PC-9 (cell line): ENCODE measurements at regions of chr2 and their contacts with region 1.

Region 1: GRCh38 chr2:47402805-47403608 is at the start of gene MSH2:
- DNase-seq: peak; percentile 86 to 93
- H3K4me3 ChIP-seq: peak within 1 kb of the TSS; percentile 61
- H3K27ac ChIP-seq: peak within 1 kb of the TSS; percentile 42
- H3K4me1 ChIP-seq: peaks cover 20% of the 10 kb centered on the region
- H3K27me3 ChIP-seq: no peaks in the 10 kb centered on the region
- CTCF ChIP-seq: no peak
- total RNA-seq, gene MSH2: 41.7 and 54.2 TPM in 2 replicates

Region 2: DNA sequence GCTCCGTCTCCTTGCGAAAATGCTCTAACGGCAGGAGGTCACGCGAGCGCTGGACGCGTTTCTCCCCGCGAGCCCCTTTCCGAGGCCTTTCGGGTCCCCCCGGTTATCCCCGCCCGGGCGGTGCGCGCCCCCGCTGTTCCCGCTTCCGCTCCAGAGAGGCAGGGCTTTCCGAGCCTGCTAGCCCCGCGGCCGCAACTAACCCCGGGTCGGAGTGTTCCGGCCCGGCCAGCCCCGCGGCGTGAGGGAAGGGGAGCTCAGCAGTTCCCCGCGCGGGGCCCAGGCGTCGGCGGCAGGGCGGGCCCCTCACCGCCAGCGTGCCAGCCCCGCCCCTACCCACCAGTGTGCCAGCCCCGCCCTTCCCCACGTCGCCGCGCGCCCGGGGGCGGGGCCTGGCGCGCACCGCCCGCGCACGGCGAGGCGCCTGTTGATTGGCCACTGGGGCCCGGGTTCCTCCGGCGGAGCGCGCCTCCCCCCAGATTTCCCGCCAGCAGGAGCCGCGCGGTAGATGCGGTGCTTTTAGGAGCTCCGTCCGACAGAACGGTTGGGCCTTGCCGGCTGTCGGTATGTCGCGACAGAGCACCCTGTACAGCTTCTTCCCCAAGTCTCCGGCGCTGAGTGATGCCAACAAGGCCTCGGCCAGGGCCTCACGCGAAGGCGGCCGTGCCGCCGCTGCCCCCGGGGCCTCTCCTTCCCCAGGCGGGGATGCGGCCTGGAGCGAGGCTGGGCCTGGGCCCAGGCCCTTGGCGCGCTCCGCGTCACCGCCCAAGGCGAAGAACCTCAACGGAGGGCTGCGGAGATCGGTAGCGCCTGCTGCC is 379.9 kb after region 1 on chr2 and contains the start of gene MSH6:
- CTCF ChIA-PET with region 1: interaction called, 3 read pairs
- POLR2A ChIA-PET with region 1: no interaction called
- intact Hi-C with region 1: loop called (anchors 5 kb)
- DNase-seq: peak; percentile 76 to 94
- H3K4me3 ChIP-seq: peak within 1 kb of the TSS; percentile 97
- H3K27ac ChIP-seq: peak within 1 kb of the TSS; percentile 57
- H3K4me1 ChIP-seq: peaks cover 18% of the 10 kb centered on the region
- H3K27me3 ChIP-seq: no peaks in the 10 kb centered on the region
- CTCF ChIP-seq: no peak
- total RNA-seq, gene MSH6: 105 and 123 TPM in 2 replicates